CD4-positive, alpha-beta T cell (primary cell): ENCODE measurements at regions of chr22 and their contacts with region 1.

Region 1: DNA sequence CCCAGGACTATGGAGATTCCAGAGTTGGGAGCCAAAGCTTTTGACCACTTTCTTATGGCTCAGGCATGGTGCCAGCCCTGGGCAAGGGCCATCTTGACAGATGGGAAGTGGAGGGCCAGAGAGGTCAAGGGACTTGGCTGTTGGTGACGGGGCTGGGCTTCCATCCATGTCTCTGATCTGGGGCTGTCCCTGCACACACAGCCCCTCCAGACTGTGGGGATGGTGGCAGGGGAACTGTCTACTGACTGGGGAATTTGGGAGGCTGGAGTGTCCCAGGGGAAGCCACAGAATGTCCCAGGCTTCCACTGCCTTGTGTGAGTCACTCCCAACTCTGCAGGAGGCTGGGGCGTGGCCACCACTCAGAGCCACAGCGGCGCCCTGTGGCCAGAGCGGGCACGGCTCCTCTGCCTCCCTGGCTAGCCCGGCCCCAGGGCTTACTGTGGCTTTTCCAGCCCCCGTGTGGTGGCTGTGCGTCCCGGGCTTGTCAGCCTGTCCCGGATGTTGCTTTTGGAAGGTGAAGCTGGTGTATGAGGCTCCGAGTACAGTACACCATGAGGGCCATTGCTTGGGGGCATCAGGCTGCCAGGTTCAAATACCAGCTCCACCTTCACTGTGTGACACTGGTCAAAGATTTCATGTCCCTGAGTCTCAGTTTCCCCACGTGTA is 19.6 kb downstream of the C22orf23 start:
- DNase-seq: peak; percentile 64 to 90 (median 76)
- ATAC-seq: peak; percentile 100
- H3K4me3 ChIP-seq: no peak overlapping the region
- H3K4me3 Mint-ChIP-seq: no peak overlapping the region
- H3K27ac ChIP-seq: no peak overlapping the region
- H3K27ac Mint-ChIP-seq: no peak overlapping the region
- H3K4me1 ChIP-seq: peaks cover 9% of the 10 kb centered on the region
- H3K4me1 Mint-ChIP-seq: peaks cover 11% of the 10 kb centered on the region
- H3K27me3 ChIP-seq: no peaks in the 10 kb centered on the region
- H3K27me3 Mint-ChIP-seq: no peaks in the 10 kb centered on the region
- CTCF ChIP-seq: peak; percentile 93

Region 2: DNA sequence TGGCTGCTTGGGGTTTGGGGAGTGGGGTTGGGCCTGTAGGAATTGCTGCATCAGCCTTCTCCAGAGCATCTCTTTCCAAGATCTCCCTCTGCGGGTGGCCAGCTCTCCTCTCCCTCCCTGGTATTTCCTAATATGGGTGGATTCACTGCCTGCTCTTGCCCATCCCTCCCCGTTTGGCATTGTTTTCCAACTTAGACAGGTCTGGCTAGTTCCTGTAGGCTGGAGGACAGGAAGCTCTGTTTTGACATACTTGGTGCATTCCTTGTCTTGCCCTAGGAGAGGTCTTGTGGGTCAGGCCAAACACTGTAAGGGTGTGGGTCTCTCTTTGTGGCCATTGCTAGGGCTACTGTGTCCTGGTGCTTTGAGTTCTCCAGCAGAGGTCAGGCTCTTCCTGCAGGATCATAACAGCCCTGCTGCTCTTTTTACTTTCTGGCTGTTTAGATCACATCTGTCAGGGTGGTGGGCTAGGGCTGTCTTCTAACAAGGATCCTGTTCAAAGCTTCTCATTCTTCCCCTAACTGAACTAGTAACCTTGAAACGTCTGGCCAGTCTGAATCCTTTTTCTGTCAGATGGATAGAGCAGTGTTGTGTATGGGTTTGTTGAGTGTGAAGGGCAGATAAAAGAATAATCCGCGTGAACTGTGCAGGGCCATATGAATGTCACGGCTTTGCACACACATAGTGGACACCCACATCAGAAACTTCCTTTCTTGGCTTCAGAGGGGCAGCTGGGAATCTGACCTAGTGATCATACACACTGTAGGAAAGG is 46.0 kb before region 1 on chr22:
- CTCF ChIA-PET with region 1: no interaction called
- POLR2A ChIA-PET with region 1: no interaction called
- intact Hi-C with region 1: loop called in 1 of 2 experiments (anchors 5 kb)
- DNase-seq: no peak
- ATAC-seq: peak; percentile 37
- H3K4me3 ChIP-seq: no peak overlapping the region
- H3K4me3 Mint-ChIP-seq: no peak overlapping the region
- H3K27ac ChIP-seq: no peak overlapping the region
- H3K27ac Mint-ChIP-seq: peak overlapping the region; percentile 5
- H3K4me1 ChIP-seq: no peaks in the 10 kb centered on the region
- H3K4me1 Mint-ChIP-seq: peaks cover 16% of the 10 kb centered on the region
- H3K27me3 ChIP-seq: no peaks in the 10 kb centered on the region
- H3K27me3 Mint-ChIP-seq: no peaks in the 10 kb centered on the region
- CTCF ChIP-seq: no peak

Region 3: GRCh38 chr22:37896181-37896592 is 37.7 kb before region 1 on chr22:
- CTCF ChIA-PET with region 1: interaction called, 4 read pairs
- POLR2A ChIA-PET with region 1: no interaction called
- intact Hi-C with region 1: loop called in 1 of 2 experiments (anchors 2 kb)
- DNase-seq: peak; percentile 11 to 85 (median 41)
- ATAC-seq: peak; percentile 97
- H3K4me3 ChIP-seq: peak overlapping the region; percentile 23
- H3K4me3 Mint-ChIP-seq: peak overlapping the region; percentile 75
- H3K27ac ChIP-seq: peak overlapping the region; percentile 47 to 75
- H3K27ac Mint-ChIP-seq: peak overlapping the region; percentile 94
- H3K4me1 ChIP-seq: peaks cover 26% of the 10 kb centered on the region
- H3K4me1 Mint-ChIP-seq: peaks cover 33% of the 10 kb centered on the region
- H3K27me3 ChIP-seq: no peaks in the 10 kb centered on the region
- H3K27me3 Mint-ChIP-seq: no peaks in the 10 kb centered on the region
- CTCF ChIP-seq: no peak

Region 4: GRCh38 chr22:37905534-37906363 is 28.1 kb before region 1 on chr22 and contains the start of gene MICALL1:
- CTCF ChIA-PET with region 1: interaction called, 7 read pairs
- POLR2A ChIA-PET with region 1: interaction called, 4 read pairs
- intact Hi-C with region 1: loop called in 1 of 2 experiments (anchors 1 kb)
- DNase-seq: peak; percentile 31 to 88 (median 69)
- ATAC-seq: peak; percentile 78
- H3K4me3 ChIP-seq: peak within 1 kb of the TSS; percentile 60
- H3K4me3 Mint-ChIP-seq: peak within 1 kb of the TSS; percentile 91
- H3K27ac ChIP-seq: peak within 1 kb of the TSS; percentile 55 to 64
- H3K27ac Mint-ChIP-seq: peak within 1 kb of the TSS; percentile 87
- H3K4me1 ChIP-seq: peaks cover 22% of the 10 kb centered on the region
- H3K4me1 Mint-ChIP-seq: peaks cover 28% of the 10 kb centered on the region
- H3K27me3 ChIP-seq: no peaks in the 10 kb centered on the region
- H3K27me3 Mint-ChIP-seq: no peaks in the 10 kb centered on the region
- CTCF ChIP-seq: no peak
- total RNA-seq, gene MICALL1: 16.9 to 20.7 TPM

Region 5: GRCh38 chr22:38415561-38416321 is 481.9 kb after region 1 on chr22:
- CTCF ChIA-PET with region 1: no interaction called
- POLR2A ChIA-PET with region 1: no interaction called
- intact Hi-C with region 1: no loop called
- DNase-seq: peak in 2 of 14 experiments; percentile 7 to 30
- ATAC-seq: no peak
- H3K4me3 ChIP-seq: no peak overlapping the region
- H3K4me3 Mint-ChIP-seq: no peak overlapping the region
- H3K27ac ChIP-seq: no peak overlapping the region
- H3K27ac Mint-ChIP-seq: no peak overlapping the region
- H3K4me1 ChIP-seq: peaks cover 10% of the 10 kb centered on the region
- H3K4me1 Mint-ChIP-seq: no peaks in the 10 kb centered on the region
- H3K27me3 ChIP-seq: no peaks in the 10 kb centered on the region
- H3K27me3 Mint-ChIP-seq: peaks cover 4% of the 10 kb centered on the region
- CTCF ChIP-seq: no peak